ENCODE measurements at regions of chr18 and their contacts with region 1.

Region 1: GRCh38 chr18:77054606-77055428 is 77.8 kb downstream of the MBP start:
- DNase-seq: peak; percentile 92
- H3K4me3 Mint-ChIP-seq: peak overlapping the region; percentile 79
- H3K27ac Mint-ChIP-seq: peak overlapping the region; percentile 94
- H3K4me1 Mint-ChIP-seq: peaks cover 76% of the 10 kb centered on the region
- H3K27me3 Mint-ChIP-seq: no peaks in the 10 kb centered on the region

Region 2: GRCh38 chr18:76721207-76721996 is 333.4 kb before region 1 on chr18:
- CTCF ChIA-PET with region 1: no interaction called
- POLR2A ChIA-PET with region 1: interaction called, 10 read pairs
- DNase-seq: peak; percentile 83
- H3K4me3 Mint-ChIP-seq: peak overlapping the region; percentile 66
- H3K27ac Mint-ChIP-seq: peak overlapping the region; percentile 98
- H3K4me1 Mint-ChIP-seq: peaks cover 63% of the 10 kb centered on the region
- H3K27me3 Mint-ChIP-seq: no peaks in the 10 kb centered on the region

Region 3: DNA sequence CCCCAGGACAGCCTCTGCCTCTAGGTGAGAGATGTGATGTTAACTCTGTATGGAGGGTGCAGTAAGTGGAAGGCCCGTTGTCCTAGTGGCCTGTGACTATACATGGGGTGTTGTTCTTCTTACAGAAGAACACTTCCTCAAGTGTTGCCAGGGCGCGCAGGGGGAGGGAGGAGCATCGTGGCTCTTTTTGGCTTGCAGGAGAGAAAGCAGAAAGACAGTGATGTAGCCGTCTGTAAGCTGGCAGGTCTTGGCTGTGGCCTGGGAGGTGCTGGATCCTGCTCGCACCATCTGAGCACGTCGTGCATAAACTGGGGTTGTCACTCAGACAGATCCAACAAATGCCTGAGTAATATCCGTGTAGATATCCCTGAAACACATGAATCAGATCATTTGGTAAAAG is 188.2 kb before region 1 on chr18:
- CTCF ChIA-PET with region 1: no interaction called
- POLR2A ChIA-PET with region 1: no interaction called
- DNase-seq: no peak
- H3K4me3 Mint-ChIP-seq: no peak overlapping the region
- H3K27ac Mint-ChIP-seq: no peak overlapping the region
- H3K4me1 Mint-ChIP-seq: peaks cover 2% of the 10 kb centered on the region
- H3K27me3 Mint-ChIP-seq: no peaks in the 10 kb centered on the region

Region 4: GRCh38 chr18:77067291-77068061 is 12.7 kb after region 1 on chr18:
- CTCF ChIA-PET with region 1: interaction called, 49 read pairs
- POLR2A ChIA-PET with region 1: interaction called, 170 read pairs
- DNase-seq: peak; percentile 82
- H3K4me3 Mint-ChIP-seq: peak overlapping the region; percentile 53
- H3K27ac Mint-ChIP-seq: peak overlapping the region; percentile 99
- H3K4me1 Mint-ChIP-seq: peaks cover 100% of the 10 kb centered on the region
- H3K27me3 Mint-ChIP-seq: no peaks in the 10 kb centered on the region

Region 5: DNA sequence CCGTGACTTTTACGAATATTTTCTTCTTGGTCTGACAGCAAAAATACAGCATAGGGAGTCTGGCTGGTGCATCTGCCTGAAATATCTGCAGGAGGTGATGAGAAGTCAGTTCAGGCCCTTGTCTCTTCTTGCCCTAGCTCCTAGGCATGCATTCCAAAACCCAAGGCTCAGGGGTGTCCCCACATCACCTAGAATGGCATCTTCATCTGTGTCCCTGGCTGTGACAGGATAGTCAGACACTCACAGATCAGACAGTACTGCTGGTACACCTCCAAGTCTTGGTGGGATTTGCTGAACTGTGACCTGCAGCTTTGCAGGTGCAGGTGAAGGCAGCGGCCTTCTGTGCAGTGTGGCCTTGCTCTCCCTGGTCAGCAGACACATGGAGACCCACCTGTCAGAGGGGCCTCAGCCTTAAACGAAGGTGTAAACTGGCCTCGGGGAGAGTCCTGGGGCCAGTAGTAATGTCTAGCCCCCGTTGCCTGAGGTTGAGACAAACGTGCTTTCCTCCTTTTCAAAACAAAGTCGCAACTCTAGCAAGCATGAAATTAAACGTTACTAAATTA is 35.0 kb after region 1 on chr18:
- CTCF ChIA-PET with region 1: no interaction called
- POLR2A ChIA-PET with region 1: no interaction called
- DNase-seq: no peak
- H3K4me3 Mint-ChIP-seq: no peak overlapping the region
- H3K27ac Mint-ChIP-seq: no peak overlapping the region
- H3K4me1 Mint-ChIP-seq: peaks cover 40% of the 10 kb centered on the region
- H3K27me3 Mint-ChIP-seq: no peaks in the 10 kb centered on the region

Region 6: DNA sequence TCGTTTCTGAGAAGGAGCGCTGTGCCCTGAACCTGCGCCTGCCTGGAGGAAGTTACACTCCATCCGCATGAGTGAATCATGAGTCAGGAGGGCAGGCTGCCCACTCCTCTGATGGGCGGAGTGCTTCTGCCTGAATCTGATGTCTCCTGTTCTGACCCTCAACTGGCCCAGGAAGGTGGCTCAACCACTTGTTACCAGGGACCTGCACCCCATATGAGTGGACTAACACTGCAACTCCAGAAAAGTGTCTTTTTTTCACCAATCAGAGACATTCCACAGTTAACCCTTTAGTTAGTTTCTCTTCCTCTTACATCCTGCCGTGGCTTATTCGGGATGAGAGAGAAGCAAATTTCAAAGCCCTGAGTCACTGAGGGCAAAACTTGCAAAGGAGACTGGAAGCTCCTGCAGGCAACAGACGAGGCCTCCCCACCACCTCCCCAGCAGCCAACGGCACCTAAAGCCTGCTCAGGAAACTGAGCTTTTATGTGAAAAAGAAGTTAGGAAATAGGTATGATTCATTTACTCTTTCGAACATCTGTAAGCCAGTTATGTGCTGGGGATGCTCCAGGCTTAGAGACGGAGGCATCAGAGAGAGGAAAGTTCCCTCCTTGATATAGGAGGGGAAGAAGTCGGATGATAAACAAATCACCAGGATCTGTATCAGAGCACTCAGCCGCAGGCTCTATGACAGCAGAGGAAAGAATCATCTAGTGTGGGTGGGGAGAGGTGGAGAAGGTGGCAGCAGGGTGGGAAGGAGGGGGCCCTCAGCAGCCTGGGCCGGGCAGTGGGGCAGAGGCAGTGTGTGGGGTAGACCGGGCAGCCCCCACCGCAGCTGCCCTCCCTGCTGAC is 46.8 kb after region 1 on chr18:
- CTCF ChIA-PET with region 1: interaction called, 15 read pairs
- POLR2A ChIA-PET with region 1: interaction called, 61 read pairs
- DNase-seq: peak; percentile 61
- H3K4me3 Mint-ChIP-seq: peak overlapping the region; percentile 69
- H3K27ac Mint-ChIP-seq: peak overlapping the region; percentile 99
- H3K4me1 Mint-ChIP-seq: peaks cover 95% of the 10 kb centered on the region
- H3K27me3 Mint-ChIP-seq: no peaks in the 10 kb centered on the region

Region 7: GRCh38 chr18:77124452-77124922 is 69.7 kb after region 1 on chr18:
- CTCF ChIA-PET with region 1: interaction called, 6 read pairs
- POLR2A ChIA-PET with region 1: interaction called, 61 read pairs
- DNase-seq: peak; percentile 73
- H3K4me3 Mint-ChIP-seq: peak overlapping the region; percentile 61
- H3K27ac Mint-ChIP-seq: peak overlapping the region; percentile 78
- H3K4me1 Mint-ChIP-seq: peaks cover 84% of the 10 kb centered on the region
- H3K27me3 Mint-ChIP-seq: no peaks in the 10 kb centered on the region

Region 8: GRCh38 chr18:77208964-77209363 is 154.1 kb after region 1 on chr18:
- CTCF ChIA-PET with region 1: interaction called, 20 read pairs
- POLR2A ChIA-PET with region 1: interaction called, 3 read pairs
- DNase-seq: peak; percentile 33
- H3K4me3 Mint-ChIP-seq: peak overlapping the region; percentile 83
- H3K27ac Mint-ChIP-seq: peak overlapping the region; percentile 84
- H3K4me1 Mint-ChIP-seq: peaks cover 50% of the 10 kb centered on the region
- H3K27me3 Mint-ChIP-seq: no peaks in the 10 kb centered on the region

Measured in activated CD4-positive, alpha-beta memory T cell treated with anti-CD3 and anti-CD28 coated beads, Interleukin-2, amount 10 ng/mL, durations not matched to agents 7 days and 5 days (primary cell).